Stomach (tissue), 19 donors: ENCODE measurements at regions of chr18 and their contacts with region 1.

Region 1: DNA sequence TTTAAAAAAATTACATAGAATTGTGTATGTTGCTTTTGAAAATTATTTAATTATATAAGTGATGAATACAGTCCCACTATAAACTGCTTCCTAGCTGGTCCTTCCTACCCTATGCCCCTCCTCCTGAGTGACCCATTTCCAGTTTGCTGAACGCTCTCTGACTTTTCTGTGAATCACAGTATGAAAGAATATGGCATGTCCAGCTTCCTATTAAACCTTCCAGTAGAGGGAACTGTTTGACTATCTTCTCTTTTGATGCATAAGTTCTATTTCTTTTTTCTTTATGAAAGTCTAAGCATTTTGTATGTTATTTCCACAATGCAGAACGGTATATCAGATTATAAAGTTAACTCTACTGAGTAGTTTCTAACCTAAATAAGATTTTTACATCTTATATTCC is 41.3 kb downstream of the PSMG2 start:
- DNase-seq: peak in 1 of 2 donors; percentile 71
- H3K4me3 ChIP-seq: no peak overlapping the region
- H3K27ac ChIP-seq: no peak overlapping the region
- H3K4me1 ChIP-seq: no peaks in the 10 kb centered on the region
- H3K27me3 ChIP-seq: no peaks in the 10 kb centered on the region
- CTCF ChIP-seq: peak in 5 of 7 experiments; percentile 13 to 61 (median 34)
- EP300 ChIP-seq: no peak
- POLR2A ChIP-seq: no peak

Region 2: DNA sequence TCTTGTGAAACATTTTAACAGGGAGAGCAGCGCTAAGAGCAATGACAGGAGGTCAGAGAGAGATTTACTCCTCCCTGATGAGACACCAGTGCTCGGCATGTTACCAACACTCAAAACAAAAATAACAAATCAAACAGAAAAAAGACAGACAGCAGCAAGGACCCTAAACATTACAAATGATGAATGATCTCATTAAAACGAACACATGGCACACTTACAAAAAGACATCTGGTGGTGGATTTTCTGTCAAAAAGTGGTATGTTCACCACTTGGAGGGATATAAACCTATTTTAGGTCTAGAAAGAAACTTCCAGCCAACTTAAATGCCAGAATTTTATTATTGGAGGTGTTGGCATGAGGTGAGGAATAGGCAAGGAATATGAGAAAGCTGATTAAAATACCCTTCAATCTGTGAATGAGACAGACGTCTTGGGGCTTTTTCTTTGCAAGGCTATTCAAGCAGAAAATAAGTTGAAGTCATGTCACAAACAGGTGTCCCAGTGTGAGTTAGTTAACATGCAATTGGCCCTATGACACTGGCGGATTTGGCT is 223.6 kb before region 1 on chr18:
- intact Hi-C with region 1: no loop called
- DNase-seq: peak in 1 of 2 donors; percentile 9
- H3K4me3 ChIP-seq: no peak overlapping the region
- H3K27ac ChIP-seq: no peak overlapping the region
- H3K4me1 ChIP-seq: peaks cover 0 to 12% (median 5%) of the 10 kb centered on the region in 4 donors
- H3K27me3 ChIP-seq: no peaks in the 10 kb centered on the region
- CTCF ChIP-seq: no peak
- EP300 ChIP-seq: no peak
- POLR2A ChIP-seq: no peak

Region 3: GRCh38 chr18:12890506-12890905 is 146.4 kb after region 1 on chr18:
- intact Hi-C with region 1: loop called (anchors 10 kb)
- DNase-seq: no peak
- H3K4me3 ChIP-seq: no peak overlapping the region
- H3K27ac ChIP-seq: no peak overlapping the region
- H3K4me1 ChIP-seq: peaks cover 0 to 3% (median 0%) of the 10 kb centered on the region in 4 donors
- H3K27me3 ChIP-seq: peaks cover 0 to 12% (median 9%) of the 10 kb centered on the region in 3 donors
- CTCF ChIP-seq: no peak
- EP300 ChIP-seq: no peak
- POLR2A ChIP-seq: no peak